ENCODE measurements at regions of chr18 and their contacts with region 1.

Region 1: DNA sequence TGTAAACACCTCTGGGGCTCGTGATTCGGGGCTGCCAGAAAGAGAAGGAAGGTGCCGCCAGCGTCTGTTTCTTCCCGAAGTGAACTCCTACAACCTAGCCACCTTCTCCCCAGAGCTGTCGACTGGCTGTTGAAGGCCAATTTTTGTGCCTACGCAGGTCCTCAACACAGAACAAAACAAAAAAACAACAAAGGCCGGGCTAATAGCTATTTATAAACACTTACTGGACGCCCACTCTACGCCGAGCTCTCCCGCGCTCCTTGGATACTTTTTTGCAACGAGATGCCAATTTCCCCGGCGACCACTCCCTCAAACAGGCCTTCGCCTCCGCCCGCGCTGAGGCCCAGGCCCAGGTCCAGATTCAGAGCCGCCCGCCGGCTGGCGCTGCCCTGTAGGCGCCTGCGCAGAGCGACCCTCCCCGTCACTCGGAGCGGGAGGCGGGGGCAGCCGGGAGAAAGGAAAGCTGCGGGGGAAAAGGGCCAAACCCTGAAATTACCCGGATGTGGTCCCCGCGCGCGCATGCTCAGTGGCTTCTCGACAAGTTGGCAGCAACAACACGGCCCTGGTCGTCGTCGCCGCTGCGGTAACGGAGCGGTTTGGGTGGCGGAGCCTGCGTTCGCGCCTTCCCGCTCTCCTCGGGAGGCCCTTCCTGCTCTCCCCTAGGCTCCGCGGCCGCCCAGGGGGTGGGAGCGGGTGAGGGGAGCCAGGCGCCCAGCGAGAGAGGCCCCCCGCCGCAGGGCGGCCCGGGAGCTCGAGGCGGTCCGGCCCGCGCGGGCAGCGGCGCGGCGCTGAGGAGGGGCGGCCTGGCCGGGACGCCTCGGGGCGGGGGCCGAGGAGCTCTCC is at the start of gene SMAD4:
- DNase-seq: peak; percentile 85
- H3K4me3 ChIP-seq: peak within 1 kb of the TSS; percentile 87
- H3K27ac ChIP-seq: peak within 1 kb of the TSS; percentile 57
- H3K4me1 ChIP-seq: peaks cover 14% of the 10 kb centered on the region
- CTCF ChIP-seq: no peak
- total RNA-seq, gene SMAD4: 28.1 and 44.7 TPM in 2 replicates

Region 2: DNA sequence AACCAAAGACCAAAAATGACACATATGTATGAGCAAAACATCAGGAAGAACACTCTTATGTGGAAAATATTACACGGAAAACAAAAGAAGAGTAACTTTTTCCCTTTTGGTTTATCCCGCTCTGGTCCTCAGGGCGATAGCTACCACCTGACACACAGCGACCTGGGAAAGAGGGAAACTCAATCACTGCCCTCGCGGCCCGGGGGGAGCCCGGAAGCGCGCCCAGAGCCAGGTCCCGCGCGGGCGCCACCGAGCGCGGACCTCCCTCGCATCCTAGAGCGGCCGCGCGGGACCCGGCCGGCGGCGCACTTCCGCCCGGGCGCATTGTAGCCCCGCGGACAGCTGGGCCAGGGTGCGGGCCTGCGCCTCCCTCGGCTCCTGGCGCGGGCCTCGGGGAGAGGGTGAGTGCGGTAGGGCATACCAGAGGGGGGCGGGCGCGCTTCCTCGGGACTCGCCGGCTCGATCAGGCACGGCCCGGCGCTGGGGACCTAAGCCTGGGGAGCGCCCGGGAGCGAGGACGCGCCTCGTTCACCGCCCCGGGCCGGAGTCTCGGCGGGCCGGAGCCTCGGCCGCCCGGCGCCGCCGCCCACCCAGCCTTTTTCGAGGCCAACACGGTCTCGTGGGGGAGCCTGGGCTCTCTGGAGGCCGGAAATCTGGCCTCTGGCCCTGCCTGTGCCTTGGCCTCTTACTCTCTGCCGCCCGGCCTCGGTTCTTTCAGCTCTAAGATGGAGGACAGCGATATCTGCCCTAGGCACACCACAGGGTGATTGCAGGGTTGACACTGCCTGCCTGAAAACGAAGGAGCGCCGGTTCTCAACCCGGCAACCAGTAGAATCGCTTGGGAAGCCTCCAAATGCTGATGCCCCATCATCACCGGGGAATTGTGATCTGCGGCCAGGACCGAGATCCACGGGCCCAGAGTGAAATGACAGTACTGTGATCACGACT is 61.9 kb before region 1 on chr18 and contains the start of gene ELAC1:
- CTCF ChIA-PET with region 1: no interaction called
- POLR2A ChIA-PET with region 1: interaction called, 3 read pairs
- intact Hi-C with region 1: loop called (anchors 5 kb)
- DNase-seq: peak; percentile 77
- H3K4me3 ChIP-seq: peak within 1 kb of the TSS; percentile 85
- H3K27ac ChIP-seq: peak within 1 kb of the TSS; percentile 44
- H3K4me1 ChIP-seq: peaks cover 6% of the 10 kb centered on the region
- CTCF ChIP-seq: no peak
- total RNA-seq, gene ELAC1: 1.5 and 2.9 TPM in 2 replicates